CD4-positive, alpha-beta T cell (primary cell): ENCODE measurements at regions of chr9 and their contacts with region 1.

Region 1: DNA sequence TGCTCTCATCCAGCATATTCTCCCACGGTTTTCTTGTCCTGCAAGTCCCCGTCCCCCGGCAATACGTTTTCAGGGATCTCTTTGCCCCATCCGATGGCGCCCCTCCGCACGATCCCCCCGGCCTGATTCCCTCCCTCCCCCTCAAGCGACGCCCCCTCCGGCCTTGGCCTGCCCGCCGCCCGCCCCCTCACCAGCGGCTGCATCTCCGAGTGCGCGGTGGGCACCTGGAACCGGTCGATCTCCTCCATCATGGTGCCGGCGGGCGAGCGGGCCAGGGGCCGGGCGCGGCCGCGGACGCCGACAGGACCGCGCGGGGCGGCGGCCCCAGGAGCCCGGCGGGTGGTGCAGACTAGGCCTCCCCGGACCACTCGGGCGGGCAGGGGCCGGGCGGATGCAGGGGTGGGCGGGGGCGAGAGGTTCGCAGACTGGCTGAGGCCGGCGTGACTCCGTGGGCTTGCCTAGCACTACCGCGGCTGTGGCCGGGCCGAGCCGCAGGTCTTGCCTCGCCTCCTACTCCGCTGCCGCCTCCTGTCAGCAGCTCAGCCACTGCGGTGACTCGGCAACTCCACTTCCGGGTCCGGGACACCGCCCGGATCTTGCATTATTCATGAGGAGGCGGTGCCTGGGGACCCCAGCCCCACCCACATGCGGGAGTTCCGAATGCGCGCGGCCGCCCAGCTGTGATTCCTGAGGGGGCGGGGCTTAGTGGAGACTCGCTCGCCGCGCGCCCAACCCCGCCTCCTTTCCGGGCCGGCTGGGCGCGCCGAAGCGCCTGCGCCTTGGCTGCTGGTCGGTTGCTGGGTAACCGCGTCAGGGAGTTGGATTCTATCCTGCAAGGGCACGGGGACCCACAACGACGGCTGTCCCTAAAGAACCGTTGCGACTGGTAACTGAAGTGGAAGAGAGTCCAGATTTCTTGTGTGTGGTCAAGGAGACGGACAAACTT is at the starts of genes DNAI1 and FAM219A:
- DNase-seq: peak; percentile 97 to 100 (median 99)
- ATAC-seq: peak; percentile 96
- H3K4me3 ChIP-seq: peak within 1 kb of the TSS; percentile 72
- H3K4me3 Mint-ChIP-seq: peak within 1 kb of the TSS; percentile 98
- H3K27ac ChIP-seq: no peak within 1 kb of the TSS
- H3K27ac Mint-ChIP-seq: peak within 1 kb of the TSS; percentile 68
- H3K4me1 ChIP-seq: peaks cover 25% of the 10 kb centered on the region
- H3K4me1 Mint-ChIP-seq: peaks cover 31% of the 10 kb centered on the region
- H3K27me3 ChIP-seq: no peaks in the 10 kb centered on the region
- H3K27me3 Mint-ChIP-seq: peaks cover 9% of the 10 kb centered on the region
- CTCF ChIP-seq: no peak
- total RNA-seq, gene DNAI1: not detected
- total RNA-seq, gene FAM219A: 7.7 to 8.5 TPM

Region 2: DNA sequence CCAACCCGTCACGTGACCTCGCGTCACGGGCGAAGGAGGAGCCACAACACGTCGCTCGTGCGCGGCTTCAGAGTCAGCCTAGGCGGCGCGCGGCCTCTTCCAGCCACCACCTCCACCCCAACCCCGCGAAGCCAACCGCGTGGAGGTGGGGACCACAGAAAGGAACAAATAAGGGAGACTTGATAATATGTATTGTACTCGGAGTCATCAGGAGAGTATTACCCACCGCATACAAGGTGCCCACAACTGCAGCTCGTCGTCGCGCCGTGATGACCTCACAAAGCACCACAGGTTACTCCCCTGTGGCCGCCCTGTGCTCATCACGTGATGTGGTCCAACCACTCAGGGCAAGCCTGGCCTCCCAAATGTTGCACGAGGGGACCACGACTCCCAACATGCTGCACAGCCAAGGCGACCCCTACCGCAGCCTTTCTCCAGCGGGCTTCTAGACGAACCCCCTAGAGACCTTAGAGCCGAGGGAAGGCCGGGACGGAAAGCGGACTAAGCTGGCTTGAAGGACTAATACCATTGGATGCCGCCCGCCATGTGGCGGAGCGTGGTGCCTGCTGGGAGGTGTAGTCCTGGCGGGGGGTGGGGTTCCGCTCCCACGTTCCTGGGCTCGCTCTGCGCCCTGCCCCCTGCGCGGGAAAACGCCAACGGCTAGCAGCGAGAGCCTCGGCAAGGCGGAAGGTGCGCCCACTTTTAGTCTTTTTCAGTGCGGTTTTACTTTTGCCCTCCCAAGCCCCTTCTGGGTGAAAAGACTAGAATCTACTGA is 409.2 kb before region 1 on chr9:
- CTCF ChIA-PET with region 1: no interaction called
- POLR2A ChIA-PET with region 1: no interaction called
- intact Hi-C with region 1: loop called in 1 of 2 experiments (anchors 5 kb)
- DNase-seq: peak; percentile 92 to 98 (median 96)
- ATAC-seq: peak; percentile 82
- H3K4me3 ChIP-seq: peak overlapping the region; percentile 98
- H3K4me3 Mint-ChIP-seq: peak overlapping the region; percentile 92
- H3K27ac ChIP-seq: peak overlapping the region; percentile 83 to 93
- H3K27ac Mint-ChIP-seq: peak overlapping the region; percentile 97
- H3K4me1 ChIP-seq: peaks cover 26% of the 10 kb centered on the region
- H3K4me1 Mint-ChIP-seq: peaks cover 34% of the 10 kb centered on the region
- H3K27me3 ChIP-seq: no peaks in the 10 kb centered on the region
- H3K27me3 Mint-ChIP-seq: no peaks in the 10 kb centered on the region
- CTCF ChIP-seq: no peak

Region 3: GRCh38 chr9:34178520-34179212 is 279.6 kb before region 1 on chr9 and contains the start of gene UBAP1:
- CTCF ChIA-PET with region 1: no interaction called
- POLR2A ChIA-PET with region 1: interaction called, 4 read pairs
- intact Hi-C with region 1: loop called in 1 of 2 experiments (anchors 5 kb)
- DNase-seq: peak; percentile 88 to 98 (median 94)
- ATAC-seq: peak; percentile 97
- H3K4me3 ChIP-seq: peak within 1 kb of the TSS; percentile 71
- H3K4me3 Mint-ChIP-seq: peak within 1 kb of the TSS; percentile 94
- H3K27ac ChIP-seq: peak within 1 kb of the TSS; percentile 87 to 90
- H3K27ac Mint-ChIP-seq: peak within 1 kb of the TSS; percentile 90
- H3K4me1 ChIP-seq: peaks cover 32% of the 10 kb centered on the region
- H3K4me1 Mint-ChIP-seq: peaks cover 15% of the 10 kb centered on the region
- H3K27me3 ChIP-seq: no peaks in the 10 kb centered on the region
- H3K27me3 Mint-ChIP-seq: no peaks in the 10 kb centered on the region
- CTCF ChIP-seq: no peak
- total RNA-seq, gene UBAP1: 47.1 to 50.4 TPM

Region 4: DNA sequence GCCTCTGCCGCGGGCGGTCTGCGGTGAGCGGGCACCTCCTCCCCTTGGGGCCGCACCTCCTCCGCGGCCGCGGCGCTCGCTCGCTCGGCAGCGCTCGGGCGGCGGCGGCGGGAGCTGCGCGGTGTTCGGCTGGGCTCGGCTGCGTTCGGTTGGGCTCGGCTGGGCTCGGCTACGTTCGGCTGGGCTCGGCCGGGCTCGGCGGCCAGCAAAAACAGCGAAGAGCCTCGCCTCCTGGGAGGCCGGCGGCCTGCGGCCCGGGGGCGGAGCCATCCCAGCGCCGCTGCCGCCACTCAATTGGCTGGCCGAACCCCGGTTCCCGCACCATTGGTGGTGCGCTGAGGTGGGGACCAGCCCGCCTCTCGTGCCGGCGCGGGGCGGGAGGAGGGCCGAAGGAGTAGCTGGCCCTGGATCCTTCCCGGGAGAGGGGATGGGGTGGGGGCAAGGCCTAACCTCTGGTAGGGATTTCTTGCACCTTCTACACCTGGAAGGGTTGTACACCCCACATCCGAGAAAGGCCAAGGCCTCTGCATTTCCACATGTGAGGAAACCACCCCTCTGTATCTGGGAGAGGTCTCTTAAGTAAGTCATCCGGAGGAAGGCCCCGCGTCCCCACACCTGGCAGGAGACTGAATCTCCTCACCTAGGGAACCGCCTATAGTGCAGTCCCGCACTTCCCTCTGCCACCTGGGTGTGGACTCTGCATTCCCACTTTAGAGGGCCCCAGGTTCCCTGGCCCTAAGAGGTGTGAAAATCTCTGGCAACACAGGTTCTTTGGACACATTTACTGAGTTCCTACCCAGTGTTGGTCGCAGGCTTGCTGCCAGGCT is 64.9 kb after region 1 on chr9 and contains the start of gene ENHO:
- CTCF ChIA-PET with region 1: no interaction called
- POLR2A ChIA-PET with region 1: interaction called, 6 read pairs
- intact Hi-C with region 1: loop called in 1 of 2 experiments (anchors 2 kb)
- DNase-seq: peak; percentile 75 to 96 (median 90)
- ATAC-seq: peak; percentile 98
- H3K4me3 ChIP-seq: peak within 1 kb of the TSS; percentile 55
- H3K4me3 Mint-ChIP-seq: peak within 1 kb of the TSS; percentile 69
- H3K27ac ChIP-seq: no peak within 1 kb of the TSS
- H3K27ac Mint-ChIP-seq: no peak within 1 kb of the TSS
- H3K4me1 ChIP-seq: peaks cover 16% of the 10 kb centered on the region
- H3K4me1 Mint-ChIP-seq: peaks cover 12% of the 10 kb centered on the region
- H3K27me3 ChIP-seq: no peaks in the 10 kb centered on the region
- H3K27me3 Mint-ChIP-seq: no peaks in the 10 kb centered on the region
- CTCF ChIP-seq: no peak
- total RNA-seq, gene ENHO: 0.45 TPM in 1 of 2 experiments, not detected in the other

Region 5: DNA sequence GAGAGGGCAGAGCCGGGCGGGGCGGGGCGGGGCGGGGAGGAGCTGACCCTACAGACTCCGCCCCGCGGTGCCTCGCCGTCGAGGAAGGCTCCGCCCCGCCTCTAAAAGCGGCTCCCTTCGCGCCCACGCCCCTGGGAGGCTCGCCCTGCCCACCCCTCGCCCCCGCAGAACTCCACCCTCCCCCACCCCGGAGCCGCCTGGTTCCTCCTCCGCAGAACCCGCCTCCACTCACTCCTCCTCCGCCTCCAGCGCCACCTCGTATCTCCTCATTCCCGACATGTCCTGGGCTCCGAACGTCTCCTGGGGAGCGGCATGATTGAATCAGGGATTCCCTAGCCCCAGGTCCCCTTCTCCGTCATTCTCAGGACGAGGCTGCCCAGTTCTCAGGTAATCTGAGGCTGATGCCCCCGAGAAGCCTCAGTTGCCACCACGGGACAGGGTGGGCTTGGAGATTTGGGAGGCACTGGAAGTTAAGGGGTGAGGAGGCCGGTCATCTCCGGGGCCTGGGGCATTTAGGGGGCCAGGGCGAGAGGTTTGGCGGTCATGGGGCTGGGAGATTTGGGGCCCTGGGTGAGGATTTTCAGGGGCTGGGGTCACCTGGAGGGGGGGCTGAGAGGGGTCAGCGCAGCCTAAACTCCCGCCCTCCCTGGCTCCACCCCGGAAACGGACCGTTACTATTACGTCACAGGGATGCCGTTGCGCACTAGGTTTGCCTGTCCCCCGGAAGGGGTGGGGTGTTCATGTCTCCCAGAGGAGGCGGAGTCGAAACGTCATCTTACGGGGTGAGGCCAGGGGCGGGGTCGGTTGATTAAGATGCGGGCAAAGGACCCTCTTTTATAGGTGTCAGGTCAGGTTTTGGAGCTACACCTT is 207.3 kb after region 1 on chr9:
- CTCF ChIA-PET with region 1: no interaction called
- POLR2A ChIA-PET with region 1: interaction called, 4 read pairs
- intact Hi-C with region 1: loop called in 1 of 2 experiments (anchors 5 kb)
- DNase-seq: peak; percentile 81 to 97 (median 88)
- ATAC-seq: peak; percentile 79
- H3K4me3 ChIP-seq: peak overlapping the region; percentile 90
- H3K4me3 Mint-ChIP-seq: peak overlapping the region; percentile 97
- H3K27ac ChIP-seq: peak overlapping the region; percentile 95 to 99
- H3K27ac Mint-ChIP-seq: peak overlapping the region; percentile 99
- H3K4me1 ChIP-seq: peaks cover 55% of the 10 kb centered on the region
- H3K4me1 Mint-ChIP-seq: peaks cover 52% of the 10 kb centered on the region
- H3K27me3 ChIP-seq: no peaks in the 10 kb centered on the region
- H3K27me3 Mint-ChIP-seq: no peaks in the 10 kb centered on the region
- CTCF ChIP-seq: no peak